Caco-2 (cell line): ENCODE measurements at regions of chr12 and their contacts with region 1.

Region 1: DNA sequence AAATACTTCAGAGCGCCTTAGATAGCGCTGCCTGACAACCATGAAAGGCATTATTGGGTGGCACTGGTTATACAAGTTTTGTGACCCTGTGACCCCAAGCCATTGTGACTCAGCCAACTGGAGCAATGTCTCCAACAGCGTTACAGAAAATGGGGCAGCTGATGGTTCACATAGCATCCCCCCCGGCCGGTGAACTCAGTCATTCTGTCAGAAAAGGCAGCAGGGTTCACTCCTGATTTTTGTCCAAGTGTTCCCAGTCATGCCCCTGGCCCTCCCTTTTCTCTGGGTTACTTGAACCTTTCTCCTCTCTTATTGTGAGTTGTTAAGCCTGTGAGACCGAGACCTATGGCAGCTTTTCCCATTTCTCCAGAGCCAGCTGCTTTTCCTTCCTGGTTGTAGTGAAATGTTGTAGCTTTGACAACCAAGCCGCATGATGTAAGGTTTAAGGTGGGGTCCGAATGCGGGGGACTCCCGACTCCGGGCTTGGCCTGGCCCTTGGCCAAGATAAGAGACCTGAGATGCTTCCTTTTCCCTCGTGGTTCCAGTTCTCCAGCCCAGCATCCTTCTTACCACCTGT is 22.0 kb downstream of the CD9 start:
- DNase-seq: peak; percentile 70 to 71
- H3K4me3 ChIP-seq: no peak overlapping the region
- H3K4me3 Mint-ChIP-seq: no peak overlapping the region
- H3K27ac Mint-ChIP-seq: peak overlapping the region; percentile 73
- H3K4me1 ChIP-seq: peaks cover 67% of the 10 kb centered on the region
- H3K4me1 Mint-ChIP-seq: peaks cover 52% of the 10 kb centered on the region
- H3K27me3 ChIP-seq: no peaks in the 10 kb centered on the region
- H3K27me3 Mint-ChIP-seq: no peaks in the 10 kb centered on the region
- CTCF ChIP-seq: no peak

Region 2: DNA sequence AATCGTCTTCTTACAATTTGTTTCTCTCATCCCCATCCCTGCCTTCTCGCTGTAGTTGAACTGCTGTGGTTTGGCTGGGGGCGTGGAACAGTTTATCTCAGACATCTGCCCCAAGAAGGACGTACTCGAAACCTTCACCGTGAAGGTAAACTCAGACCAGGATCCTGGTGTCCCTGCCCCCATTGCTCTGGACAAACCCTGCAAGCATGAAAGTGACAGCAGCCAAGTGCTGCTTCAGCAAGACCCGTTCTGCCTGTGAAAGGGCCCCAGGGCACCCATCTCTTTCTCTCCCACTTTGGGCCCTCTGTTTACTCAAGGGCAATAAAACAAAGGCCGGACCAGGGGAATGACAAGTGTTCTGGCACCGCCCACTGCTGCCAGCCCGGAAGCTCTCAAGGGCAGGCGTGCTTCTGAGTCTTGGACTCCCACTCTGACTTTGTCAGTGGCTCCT is 13.3 kb after region 1 on chr12:
- CTCF ChIA-PET with region 1: no interaction called
- POLR2A ChIA-PET with region 1: no interaction called
- intact Hi-C with region 1: no loop called
- DNase-seq: peak; percentile 89 to 93
- H3K4me3 ChIP-seq: no peak overlapping the region
- H3K4me3 Mint-ChIP-seq: peak overlapping the region; percentile 39
- H3K27ac Mint-ChIP-seq: peak overlapping the region; percentile 69
- H3K4me1 ChIP-seq: peaks cover 44% of the 10 kb centered on the region
- H3K4me1 Mint-ChIP-seq: peaks cover 54% of the 10 kb centered on the region
- H3K27me3 ChIP-seq: no peaks in the 10 kb centered on the region
- H3K27me3 Mint-ChIP-seq: no peaks in the 10 kb centered on the region
- CTCF ChIP-seq: no peak

Region 3: GRCh38 chr12:6278439-6279255 is 56.5 kb after region 1 on chr12:
- CTCF ChIA-PET with region 1: interaction called, 11 read pairs
- POLR2A ChIA-PET with region 1: no interaction called
- intact Hi-C with region 1: no loop called
- DNase-seq: peak; percentile 89 to 97
- H3K4me3 ChIP-seq: peak overlapping the region; percentile 52
- H3K4me3 Mint-ChIP-seq: peak overlapping the region; percentile 80
- H3K27ac Mint-ChIP-seq: peak overlapping the region; percentile 93
- H3K4me1 ChIP-seq: peaks cover 23% of the 10 kb centered on the region
- H3K4me1 Mint-ChIP-seq: peaks cover 42% of the 10 kb centered on the region
- H3K27me3 ChIP-seq: no peaks in the 10 kb centered on the region
- H3K27me3 Mint-ChIP-seq: no peaks in the 10 kb centered on the region
- CTCF ChIP-seq: peak; percentile 34 to 99